Activated CD8-positive, alpha-beta memory T cell treated with anti-CD3 and anti-CD28 coated beads, Interleukin-2, amount 10 ng/mL, durations not matched to agents 7 days and 5 days (primary cell): ENCODE measurements at regions of chr6 and their contacts with region 1.

Region 1: DNA sequence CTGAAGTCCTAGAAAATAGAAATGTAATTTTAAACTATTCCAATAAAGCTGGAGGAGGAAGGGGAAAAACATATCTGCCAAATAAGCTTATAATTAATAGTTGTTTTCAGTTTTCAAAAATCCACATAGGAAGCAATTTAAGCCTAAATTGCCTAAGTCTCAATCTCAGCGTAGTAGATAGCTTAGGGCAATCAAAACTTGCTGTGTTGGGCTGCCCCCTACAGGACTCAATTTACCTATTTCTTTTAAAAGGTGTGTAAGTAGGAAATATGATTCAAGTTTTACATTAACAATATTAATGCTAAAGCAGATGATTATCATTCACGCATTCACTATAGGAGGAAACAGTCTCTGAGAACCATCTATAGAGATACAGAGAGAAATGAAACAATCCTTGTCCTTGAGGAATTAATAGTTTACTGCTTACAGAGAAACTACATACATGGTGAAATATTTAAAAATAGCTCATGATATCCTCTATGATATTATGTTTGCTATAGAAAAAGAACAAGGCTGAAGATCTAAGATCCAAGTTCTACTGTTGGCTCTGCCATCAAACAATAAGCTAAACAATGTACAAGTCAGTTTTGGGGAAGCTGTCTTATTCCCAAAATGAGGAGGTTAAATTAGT is 102.1 kb downstream of the ATG5 start:
- DNase-seq: peak; percentile 85
- ATAC-seq: peak; percentile 86
- H3K4me3 Mint-ChIP-seq: no peak overlapping the region
- H3K27ac Mint-ChIP-seq: no peak overlapping the region
- H3K4me1 Mint-ChIP-seq: peaks cover 43% of the 10 kb centered on the region
- H3K27me3 Mint-ChIP-seq: no peaks in the 10 kb centered on the region

Region 2: DNA sequence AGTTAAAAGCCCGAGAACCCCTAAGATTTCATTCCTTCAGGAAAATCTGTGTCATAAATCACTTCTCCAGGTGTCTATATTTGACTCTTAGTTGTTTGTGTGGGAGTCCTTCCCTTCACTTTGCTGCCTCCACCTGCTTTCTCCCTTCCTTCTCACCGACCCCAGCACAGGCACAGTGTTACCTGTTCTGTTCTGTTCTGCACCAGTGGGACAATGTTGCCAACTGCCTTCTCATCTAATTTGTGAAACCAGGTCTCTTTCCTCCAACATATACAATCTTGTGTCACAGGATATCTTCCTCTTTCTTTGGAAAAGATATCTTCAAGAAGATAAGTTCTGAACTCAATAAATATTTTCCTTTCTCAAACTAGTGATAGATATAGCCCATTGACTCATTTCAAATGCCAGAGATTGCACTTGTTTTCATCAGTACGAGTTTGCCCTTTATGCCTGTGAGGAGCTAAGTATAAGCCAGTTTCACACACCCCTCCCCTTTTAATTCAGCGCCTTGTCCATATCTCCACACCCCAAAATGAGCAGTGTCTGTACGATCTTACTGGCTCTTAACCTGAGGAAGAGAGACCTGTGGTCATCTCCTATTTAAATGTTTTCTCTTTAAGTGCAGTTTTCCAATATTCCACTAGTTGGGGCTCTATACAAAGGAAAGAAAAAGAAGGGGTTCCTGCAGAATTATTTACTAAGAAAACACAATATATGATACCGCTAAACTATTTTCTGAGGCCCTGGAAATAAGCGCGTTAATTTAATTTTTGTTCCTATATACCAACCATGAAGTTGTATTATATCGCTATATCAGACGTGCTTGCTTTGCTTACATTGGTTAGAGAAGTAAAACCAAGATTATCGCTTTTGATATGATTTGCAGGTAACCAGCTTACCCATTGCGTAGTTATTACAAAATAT is 738.9 kb before region 1 on chr6:
- CTCF ChIA-PET with region 1: interaction called, 19 read pairs
- DNase-seq: peak; percentile 51
- ATAC-seq: peak; percentile 73
- H3K4me3 Mint-ChIP-seq: peak overlapping the region; percentile 51
- H3K27ac Mint-ChIP-seq: peak overlapping the region; percentile 86
- H3K4me1 Mint-ChIP-seq: peaks cover 80% of the 10 kb centered on the region
- H3K27me3 Mint-ChIP-seq: no peaks in the 10 kb centered on the region

Region 3: GRCh38 chr6:106085984-106086813 is 137.2 kb before region 1 on chr6 and contains the start of gene PRDM1:
- CTCF ChIA-PET with region 1: interaction called, 40 read pairs
- DNase-seq: peak; percentile 95
- ATAC-seq: peak; percentile 86
- H3K4me3 Mint-ChIP-seq: peak within 1 kb of the TSS; percentile 98
- H3K27ac Mint-ChIP-seq: peak within 1 kb of the TSS; percentile 89
- H3K4me1 Mint-ChIP-seq: peaks cover 59% of the 10 kb centered on the region
- H3K27me3 Mint-ChIP-seq: no peaks in the 10 kb centered on the region
- total RNA-seq, gene PRDM1: 97.1 to 132 TPM

Region 4: GRCh38 chr6:106103728-106104109 is 119.7 kb before region 1 on chr6:
- CTCF ChIA-PET with region 1: interaction called, 13 read pairs
- DNase-seq: peak; percentile 71
- ATAC-seq: peak; percentile 52
- H3K4me3 Mint-ChIP-seq: peak overlapping the region; percentile 90
- H3K27ac Mint-ChIP-seq: peak overlapping the region; percentile 95
- H3K4me1 Mint-ChIP-seq: peaks cover 89% of the 10 kb centered on the region
- H3K27me3 Mint-ChIP-seq: no peaks in the 10 kb centered on the region

Region 5: GRCh38 chr6:106141441-106142237 is 81.8 kb before region 1 on chr6:
- CTCF ChIA-PET with region 1: interaction called, 18 read pairs
- DNase-seq: peak; percentile 85
- ATAC-seq: peak; percentile 80
- H3K4me3 Mint-ChIP-seq: peak overlapping the region; percentile 29
- H3K27ac Mint-ChIP-seq: peak overlapping the region; percentile 95
- H3K4me1 Mint-ChIP-seq: peaks cover 78% of the 10 kb centered on the region
- H3K27me3 Mint-ChIP-seq: no peaks in the 10 kb centered on the region

Region 6: GRCh38 chr6:106252687-106253086 is 29.3 kb after region 1 on chr6:
- CTCF ChIA-PET with region 1: no interaction called
- DNase-seq: no peak
- ATAC-seq: no peak
- H3K4me3 Mint-ChIP-seq: no peak overlapping the region
- H3K27ac Mint-ChIP-seq: no peak overlapping the region
- H3K4me1 Mint-ChIP-seq: peaks cover 15% of the 10 kb centered on the region
- H3K27me3 Mint-ChIP-seq: no peaks in the 10 kb centered on the region